ENCODE measurements at regions of chr1 and their contacts with region 1.

Region 1: GRCh38 chr1:173255214-173255813 is 48.2 kb upstream of the TNFSF4 start:
- DNase-seq: no peak
- H3K4me3 Mint-ChIP-seq: no peak overlapping the region
- H3K27ac Mint-ChIP-seq: no peak overlapping the region
- H3K4me1 Mint-ChIP-seq: no peaks in the 10 kb centered on the region
- H3K27me3 Mint-ChIP-seq: no peaks in the 10 kb centered on the region

Region 2: GRCh38 chr1:173330149-173330951 is 75.0 kb after region 1 on chr1:
- CTCF ChIA-PET with region 1: interaction called, 4 read pairs
- POLR2A ChIA-PET with region 1: no interaction called
- intact Hi-C with region 1: loop called (anchors 2 kb)
- DNase-seq: no peak
- H3K4me3 Mint-ChIP-seq: no peak overlapping the region
- H3K27ac Mint-ChIP-seq: no peak overlapping the region
- H3K4me1 Mint-ChIP-seq: peaks cover 20% of the 10 kb centered on the region
- H3K27me3 Mint-ChIP-seq: no peaks in the 10 kb centered on the region

Region 3: DNA sequence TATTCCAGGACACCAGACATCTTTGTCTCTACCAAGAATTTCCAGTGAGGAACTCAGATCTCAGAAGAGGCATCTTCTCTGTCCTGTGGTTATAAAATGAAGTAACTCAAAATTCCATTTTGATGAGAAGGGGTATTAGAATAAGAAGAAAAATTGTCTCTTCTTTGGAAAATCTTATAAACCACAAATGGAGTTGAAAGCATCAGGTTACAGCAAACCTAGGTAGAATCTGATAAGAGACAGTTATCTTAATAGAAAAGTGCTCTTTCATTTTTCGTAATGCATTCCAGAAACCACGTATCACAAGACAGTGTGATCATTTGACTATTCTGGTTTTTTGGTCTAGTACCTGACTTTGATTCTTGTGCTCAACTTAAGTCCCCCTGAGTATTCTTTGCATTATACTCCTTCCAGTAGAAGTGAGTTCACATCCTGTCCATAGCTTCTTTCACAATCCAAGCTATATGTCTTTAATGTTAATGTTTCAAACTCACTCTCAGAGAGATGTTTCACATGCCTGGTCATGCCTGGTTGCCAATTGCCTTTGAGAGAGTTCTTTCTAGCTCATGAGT is 101.0 kb after region 1 on chr1:
- CTCF ChIA-PET with region 1: no interaction called
- POLR2A ChIA-PET with region 1: no interaction called
- intact Hi-C with region 1: no loop called
- DNase-seq: no peak
- H3K4me3 Mint-ChIP-seq: no peak overlapping the region
- H3K27ac Mint-ChIP-seq: no peak overlapping the region
- H3K4me1 Mint-ChIP-seq: peaks cover 36% of the 10 kb centered on the region
- H3K27me3 Mint-ChIP-seq: no peaks in the 10 kb centered on the region

Region 4: DNA sequence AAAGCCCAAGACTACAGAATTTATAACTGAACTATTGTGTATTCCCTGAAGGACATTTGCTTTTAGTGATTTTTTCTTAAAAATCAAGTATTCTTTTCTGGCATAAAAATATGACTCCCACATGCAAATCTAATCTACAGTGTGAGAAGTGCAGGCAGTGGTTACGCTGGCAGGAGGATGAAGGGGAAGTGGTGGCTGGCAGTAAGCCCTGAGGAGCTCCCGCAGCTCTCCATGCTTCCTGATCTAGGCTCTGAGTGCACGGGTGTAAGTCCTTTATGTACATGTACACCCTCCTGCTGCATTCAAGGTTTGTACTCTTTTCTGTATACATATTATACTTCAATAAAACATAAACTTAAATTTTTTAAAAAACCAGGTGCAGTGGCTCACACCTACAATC is 154.3 kb after region 1 on chr1:
- CTCF ChIA-PET with region 1: no interaction called
- POLR2A ChIA-PET with region 1: no interaction called
- intact Hi-C with region 1: loop called (anchors 5 kb)
- DNase-seq: peak; percentile 23
- H3K4me3 Mint-ChIP-seq: no peak overlapping the region
- H3K27ac Mint-ChIP-seq: no peak overlapping the region
- H3K4me1 Mint-ChIP-seq: peaks cover 26% of the 10 kb centered on the region
- H3K27me3 Mint-ChIP-seq: no peaks in the 10 kb centered on the region

Measured in activated CD4-positive, alpha-beta memory T cell treated with anti-CD3 and anti-CD28 coated beads for 36 hours (primary cell).